Natural killer cell (primary cell): ENCODE measurements at regions of chr13 and their contacts with region 1.

Region 1: DNA sequence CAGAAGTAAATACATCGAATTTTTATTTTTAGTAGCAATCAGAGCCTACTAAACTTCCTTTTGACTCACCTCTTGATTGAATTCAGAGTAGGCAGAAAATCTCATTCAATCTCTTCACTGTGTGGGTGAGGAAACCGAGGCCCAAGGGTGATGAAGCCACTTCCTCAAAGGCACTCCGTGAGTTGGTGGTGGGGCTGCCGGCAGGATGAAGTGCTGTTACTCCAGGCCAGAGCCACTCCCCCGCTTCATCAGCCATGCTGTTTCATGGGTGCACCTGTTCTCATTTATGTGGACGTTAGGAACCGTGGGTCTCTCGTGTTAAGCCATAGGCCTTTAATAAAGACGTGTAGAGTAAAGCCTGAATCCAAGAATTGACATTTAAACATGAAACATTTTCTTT is 13.2 kb downstream of the ING1 start:
- DNase-seq: peak; percentile 65 to 74
- ATAC-seq: peak; percentile 86 to 97 (median 89)
- H3K4me3 ChIP-seq: no peak overlapping the region
- H3K4me3 Mint-ChIP-seq: peak overlapping the region; percentile 91
- H3K27ac ChIP-seq: no peak overlapping the region
- H3K27ac Mint-ChIP-seq: peak overlapping the region; percentile 75 to 82
- H3K4me1 ChIP-seq: peaks cover 28% of the 10 kb centered on the region
- H3K4me1 Mint-ChIP-seq: peaks cover 30 to 36% of the 10 kb centered on the region in 2 donors
- H3K27me3 ChIP-seq: no peaks in the 10 kb centered on the region
- H3K27me3 Mint-ChIP-seq: no peaks in the 10 kb centered on the region
- CTCF ChIP-seq: no peak

Region 2: DNA sequence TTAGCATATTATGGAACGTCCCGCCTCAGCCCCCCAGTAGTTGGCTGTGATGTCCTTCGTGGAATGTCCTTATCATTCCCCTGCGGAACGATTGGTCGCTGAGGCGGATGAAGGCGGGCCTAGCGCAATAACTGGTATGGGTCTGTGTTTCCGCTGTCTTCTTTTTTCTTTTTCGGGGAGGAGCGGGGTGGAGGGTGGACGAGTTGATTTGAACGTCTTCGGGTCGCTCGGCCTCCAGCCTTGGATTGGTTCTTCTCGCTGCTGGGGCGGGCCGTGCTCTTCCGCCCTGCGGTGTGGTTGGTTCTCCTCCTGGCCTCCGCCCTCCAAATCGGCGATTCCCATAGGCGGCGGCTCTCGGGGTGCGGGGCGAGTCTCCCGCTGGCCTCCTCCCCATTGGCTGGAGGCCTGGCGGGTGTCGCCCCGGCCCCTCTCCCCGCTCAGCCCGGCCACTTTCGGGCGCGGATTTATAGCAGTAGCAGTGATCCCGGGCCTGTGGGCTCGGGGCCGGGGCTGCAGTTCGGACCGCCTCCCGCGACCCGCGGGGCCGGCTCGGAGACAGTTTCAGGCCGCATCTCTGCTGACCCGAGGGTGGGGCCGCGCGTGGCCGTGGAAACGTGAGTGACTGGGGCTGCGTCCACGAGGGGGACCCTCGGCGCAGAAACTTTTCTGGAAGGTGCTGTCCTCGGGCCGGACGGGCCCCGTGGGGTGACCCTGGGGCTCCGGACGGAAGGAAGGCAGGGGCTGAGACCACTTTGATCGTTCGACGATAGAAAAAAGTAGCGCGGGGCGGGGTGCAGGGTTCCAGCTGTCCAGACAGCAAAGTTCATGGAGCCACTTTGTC is 11.1 kb before region 1 on chr13:
- intact Hi-C with region 1: loop called (anchors 1 kb)
- DNase-seq: peak; percentile 93 to 99
- ATAC-seq: peak; percentile 55 to 79 (median 62)
- H3K4me3 ChIP-seq: peak overlapping the region; percentile 98
- H3K4me3 Mint-ChIP-seq: peak overlapping the region; percentile 97
- H3K27ac ChIP-seq: peak overlapping the region; percentile 86
- H3K27ac Mint-ChIP-seq: peak overlapping the region; percentile 86 to 97
- H3K4me1 ChIP-seq: peaks cover 25% of the 10 kb centered on the region
- H3K4me1 Mint-ChIP-seq: peaks cover 42 to 55% of the 10 kb centered on the region in 2 donors
- H3K27me3 ChIP-seq: no peaks in the 10 kb centered on the region
- H3K27me3 Mint-ChIP-seq: no peaks in the 10 kb centered on the region
- CTCF ChIP-seq: no peak

Region 3: DNA sequence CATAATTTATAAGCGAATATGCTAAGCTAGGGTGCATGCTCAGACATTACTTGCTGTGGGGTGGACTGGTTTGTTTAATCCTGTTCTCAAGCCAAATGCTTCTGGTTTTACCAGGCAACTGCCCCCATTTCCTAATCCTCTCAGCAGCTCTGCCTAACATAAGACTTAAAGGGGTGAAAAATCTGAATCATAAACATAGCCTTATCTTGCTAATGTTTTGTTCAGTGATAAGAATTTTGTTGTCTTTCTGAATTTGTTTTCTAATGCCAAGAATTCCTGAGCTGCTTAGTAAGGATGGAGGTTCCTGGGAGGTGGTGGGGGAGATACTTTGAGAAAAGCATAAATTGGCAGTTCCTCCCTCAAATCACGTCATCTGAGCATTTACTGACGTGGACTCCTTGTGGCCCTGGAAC is 29.5 kb after region 1 on chr13:
- intact Hi-C with region 1: no loop called
- DNase-seq: no peak
- ATAC-seq: no peak
- H3K4me3 ChIP-seq: no peak overlapping the region
- H3K4me3 Mint-ChIP-seq: no peak overlapping the region
- H3K27ac ChIP-seq: no peak overlapping the region
- H3K27ac Mint-ChIP-seq: no peak overlapping the region
- H3K4me1 ChIP-seq: no peaks in the 10 kb centered on the region
- H3K4me1 Mint-ChIP-seq: peaks cover 4% of the 10 kb centered on the region in 2 donors
- H3K27me3 ChIP-seq: no peaks in the 10 kb centered on the region
- H3K27me3 Mint-ChIP-seq: peaks cover 5 to 11% of the 10 kb centered on the region in 2 donors
- CTCF ChIP-seq: no peak

Region 4: DNA sequence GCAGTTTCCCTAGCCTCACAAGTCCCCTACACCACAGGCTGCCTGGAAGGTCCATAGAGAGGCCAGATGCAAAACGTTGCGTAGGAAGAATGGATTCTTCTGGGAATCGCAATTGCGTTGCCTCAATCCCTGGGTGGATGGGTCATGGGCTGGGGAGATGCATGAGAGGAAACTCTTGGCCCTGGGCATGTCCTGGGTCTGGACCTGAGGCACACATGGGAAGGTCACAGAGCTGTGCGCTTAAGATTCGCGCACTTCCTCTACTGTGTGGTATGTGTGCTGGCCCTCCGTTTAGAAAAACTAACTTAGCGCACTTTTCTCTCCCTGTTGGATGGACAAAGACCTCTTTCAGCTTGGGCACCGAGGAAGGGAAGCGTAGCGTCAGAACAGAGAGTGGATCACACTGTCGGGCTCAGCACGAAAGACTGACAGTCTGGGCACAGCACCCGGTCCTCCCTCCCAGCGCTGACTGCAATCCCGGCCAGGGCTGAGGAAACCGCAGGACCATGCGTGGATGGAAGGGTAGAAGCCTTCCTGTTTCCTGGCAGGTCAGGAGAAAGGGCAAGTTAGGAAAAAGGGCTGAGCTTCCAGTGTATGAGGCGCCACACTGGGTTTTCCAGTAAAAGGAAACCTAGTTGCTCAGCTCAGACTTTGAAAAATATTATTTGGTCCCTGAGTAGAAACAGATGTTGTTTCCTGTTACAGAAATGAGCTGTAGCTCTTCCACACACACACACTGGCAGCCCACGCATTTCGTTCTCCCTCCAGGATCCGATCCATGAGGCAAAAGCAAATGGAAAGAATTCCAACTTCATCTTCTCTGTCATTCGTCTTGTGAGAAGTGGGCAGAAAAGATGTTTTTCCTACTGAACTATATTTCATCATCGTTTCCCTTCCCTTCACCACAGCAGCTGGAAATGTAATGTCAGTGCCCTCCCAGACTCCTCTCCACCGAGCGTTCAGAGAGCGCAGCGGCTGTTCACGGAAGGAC is 72.8 kb after region 1 on chr13:
- intact Hi-C with region 1: loop called (anchors 5 kb)
- DNase-seq: no peak
- ATAC-seq: no peak
- H3K4me3 ChIP-seq: no peak overlapping the region
- H3K4me3 Mint-ChIP-seq: peak overlapping the region; percentile 63
- H3K27ac ChIP-seq: no peak overlapping the region
- H3K27ac Mint-ChIP-seq: no peak overlapping the region
- H3K4me1 ChIP-seq: peaks cover 12% of the 10 kb centered on the region
- H3K4me1 Mint-ChIP-seq: peaks cover 6 to 10% of the 10 kb centered on the region in 2 donors
- H3K27me3 ChIP-seq: peaks cover 28% of the 10 kb centered on the region
- H3K27me3 Mint-ChIP-seq: peaks cover 38 to 72% of the 10 kb centered on the region in 2 donors
- CTCF ChIP-seq: no peak